Activated CD4-positive, alpha-beta memory T cell treated with anti-CD3 and anti-CD28 coated beads for 36 hours (primary cell): ENCODE measurements at regions of chr2 and their contacts with region 1.

Region 1: DNA sequence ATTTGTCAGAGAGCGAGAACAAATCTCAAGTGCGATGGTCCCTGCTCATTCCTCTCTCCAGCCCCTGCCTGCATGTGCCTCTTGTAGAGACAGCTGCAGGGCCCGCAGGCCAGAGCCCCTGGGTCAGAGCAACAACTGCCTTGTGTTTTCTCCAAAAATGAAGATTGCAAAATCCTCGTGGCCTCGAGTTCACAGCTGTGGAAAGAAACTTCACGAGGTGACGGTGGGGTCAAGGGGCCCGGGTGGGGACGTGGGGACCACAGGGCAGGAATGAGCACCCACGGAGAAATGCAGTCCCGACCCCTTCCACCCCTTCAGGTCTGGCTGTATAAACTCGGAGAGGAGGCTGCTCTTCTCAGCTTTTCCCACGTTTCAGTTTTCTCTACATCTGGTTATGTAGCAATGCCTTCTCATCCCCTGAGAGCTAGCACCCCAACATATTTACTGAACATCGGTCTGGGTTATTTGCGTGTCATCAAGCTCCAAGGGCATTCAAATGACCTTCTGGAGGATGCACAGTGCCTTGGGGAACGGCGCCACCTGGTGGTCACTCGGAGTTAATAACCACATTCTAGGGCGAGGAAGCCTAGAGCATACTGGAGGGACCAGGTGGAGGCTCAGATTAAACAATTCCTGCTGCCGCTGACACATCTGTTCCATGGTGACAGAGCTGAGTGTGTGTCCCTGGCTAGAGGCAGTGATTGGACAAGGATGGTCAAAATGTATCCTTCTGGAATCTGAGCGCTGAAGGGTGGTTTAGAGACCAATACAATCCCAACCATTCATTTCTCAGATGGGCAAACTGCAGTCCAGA is 91.4 kb upstream of the CYRIA start:
- DNase-seq: peak; percentile 75
- H3K4me3 Mint-ChIP-seq: no peak overlapping the region
- H3K27ac Mint-ChIP-seq: no peak overlapping the region
- H3K4me1 Mint-ChIP-seq: no peaks in the 10 kb centered on the region
- H3K27me3 Mint-ChIP-seq: no peaks in the 10 kb centered on the region

Region 2: GRCh38 chr2:16525265-16525887 is 231.7 kb before region 1 on chr2:
- CTCF ChIA-PET with region 1: interaction called, 5 read pairs
- POLR2A ChIA-PET with region 1: no interaction called
- intact Hi-C with region 1: loop called (anchors 10 kb)
- DNase-seq: peak; percentile 29
- H3K4me3 Mint-ChIP-seq: no peak overlapping the region
- H3K27ac Mint-ChIP-seq: no peak overlapping the region
- H3K4me1 Mint-ChIP-seq: no peaks in the 10 kb centered on the region
- H3K27me3 Mint-ChIP-seq: no peaks in the 10 kb centered on the region

Region 3: GRCh38 chr2:16623031-16623430 is 134.0 kb before region 1 on chr2:
- CTCF ChIA-PET with region 1: interaction called, 16 read pairs
- POLR2A ChIA-PET with region 1: no interaction called
- intact Hi-C with region 1: no loop called
- DNase-seq: no peak
- H3K4me3 Mint-ChIP-seq: no peak overlapping the region
- H3K27ac Mint-ChIP-seq: no peak overlapping the region
- H3K4me1 Mint-ChIP-seq: peaks cover 29% of the 10 kb centered on the region
- H3K27me3 Mint-ChIP-seq: peaks cover 4% of the 10 kb centered on the region